Breast epithelium (tissue), 4 donors: ENCODE measurements at regions of chr9 and their contacts with region 1.

Region 1: DNA sequence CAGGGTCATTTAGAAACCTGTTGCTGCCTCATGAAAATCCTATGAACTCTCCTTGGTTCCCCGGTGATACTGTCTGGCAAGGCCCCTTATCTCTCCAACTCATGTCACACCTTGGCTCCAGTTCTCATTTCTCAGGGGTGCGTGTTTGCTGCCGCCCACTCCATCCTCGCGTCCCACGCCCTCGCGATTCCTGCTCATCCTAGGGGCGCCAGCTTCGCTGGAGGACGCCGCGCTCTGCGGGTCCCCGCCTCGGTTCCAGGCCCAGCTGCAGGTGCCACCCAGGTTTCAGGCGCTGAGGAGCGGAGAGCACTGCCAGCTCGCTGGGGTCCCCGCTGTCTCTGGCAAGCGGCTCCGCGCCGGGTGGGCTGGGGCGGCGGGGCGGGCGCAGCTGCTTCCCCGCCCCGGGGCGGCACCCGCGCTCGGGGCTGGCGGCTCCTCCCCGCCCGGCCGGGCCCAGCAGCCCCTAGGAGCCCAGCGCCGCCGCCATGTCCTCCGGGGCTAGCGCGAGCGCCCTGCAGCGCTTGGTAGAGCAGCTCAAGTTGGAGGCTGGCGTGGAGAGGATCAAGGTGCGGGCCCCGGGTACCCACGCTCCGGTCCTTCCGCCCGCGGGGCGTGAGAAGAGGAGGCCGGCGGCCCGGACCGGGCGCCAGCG is at the start of gene GNG10:
- DNase-seq: peak in 1 of 2 donors; percentile 52
- H3K4me3 ChIP-seq: peak within 1 kb of the TSS; percentile 76 to 77 (median 76)
- H3K27ac ChIP-seq: peak within 1 kb of the TSS; percentile 66 to 70
- H3K4me1 ChIP-seq: no peaks in the 10 kb centered on the region
- H3K27me3 ChIP-seq: no peaks in the 10 kb centered on the region
- CTCF ChIP-seq: no peak
- POLR2A ChIP-seq: no peak
- total RNA-seq, gene GNG10: 53.4 to 95.7 (median 91.4) TPM

Region 2: DNA sequence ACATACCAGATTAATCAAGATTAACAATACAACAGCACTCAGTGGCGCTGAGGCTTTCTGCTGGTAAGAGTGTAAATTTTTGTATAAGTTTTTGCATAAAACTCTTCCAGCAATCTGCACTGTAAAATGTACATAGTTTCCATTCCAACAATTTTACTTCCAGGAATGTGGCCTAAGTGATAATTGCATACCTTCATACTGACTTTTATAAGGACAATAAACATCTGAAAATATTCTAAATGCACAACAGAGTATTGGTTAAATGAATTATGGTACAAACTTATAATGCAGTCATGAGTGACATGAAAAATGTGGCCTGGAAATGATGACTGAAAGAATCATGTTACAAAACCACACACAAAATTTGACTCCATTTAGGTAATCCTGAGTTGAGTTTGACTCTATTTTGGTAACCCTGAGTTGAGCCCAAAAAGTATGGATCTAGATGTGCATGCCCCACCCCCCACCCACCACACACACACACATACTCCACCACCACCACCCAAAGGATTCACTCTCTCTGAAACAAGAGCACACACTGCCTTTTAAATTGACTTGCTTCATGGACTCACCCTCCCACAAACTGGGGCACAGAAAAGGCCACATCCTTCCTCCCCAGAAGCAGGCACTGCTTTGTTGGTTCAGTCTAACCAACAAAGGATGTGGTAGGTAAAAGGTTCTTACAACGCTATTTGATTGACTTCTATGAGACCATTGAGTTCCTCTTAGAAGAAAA is 376.2 kb after region 1 on chr9:
- intact Hi-C with region 1: loop called (anchors 5 kb)
- DNase-seq: no peak
- H3K4me3 ChIP-seq: no peak overlapping the region
- H3K27ac ChIP-seq: no peak overlapping the region
- H3K4me1 ChIP-seq: no peaks in the 10 kb centered on the region
- H3K27me3 ChIP-seq: no peaks in the 10 kb centered on the region
- CTCF ChIP-seq: no peak
- POLR2A ChIP-seq: no peak

Region 3: DNA sequence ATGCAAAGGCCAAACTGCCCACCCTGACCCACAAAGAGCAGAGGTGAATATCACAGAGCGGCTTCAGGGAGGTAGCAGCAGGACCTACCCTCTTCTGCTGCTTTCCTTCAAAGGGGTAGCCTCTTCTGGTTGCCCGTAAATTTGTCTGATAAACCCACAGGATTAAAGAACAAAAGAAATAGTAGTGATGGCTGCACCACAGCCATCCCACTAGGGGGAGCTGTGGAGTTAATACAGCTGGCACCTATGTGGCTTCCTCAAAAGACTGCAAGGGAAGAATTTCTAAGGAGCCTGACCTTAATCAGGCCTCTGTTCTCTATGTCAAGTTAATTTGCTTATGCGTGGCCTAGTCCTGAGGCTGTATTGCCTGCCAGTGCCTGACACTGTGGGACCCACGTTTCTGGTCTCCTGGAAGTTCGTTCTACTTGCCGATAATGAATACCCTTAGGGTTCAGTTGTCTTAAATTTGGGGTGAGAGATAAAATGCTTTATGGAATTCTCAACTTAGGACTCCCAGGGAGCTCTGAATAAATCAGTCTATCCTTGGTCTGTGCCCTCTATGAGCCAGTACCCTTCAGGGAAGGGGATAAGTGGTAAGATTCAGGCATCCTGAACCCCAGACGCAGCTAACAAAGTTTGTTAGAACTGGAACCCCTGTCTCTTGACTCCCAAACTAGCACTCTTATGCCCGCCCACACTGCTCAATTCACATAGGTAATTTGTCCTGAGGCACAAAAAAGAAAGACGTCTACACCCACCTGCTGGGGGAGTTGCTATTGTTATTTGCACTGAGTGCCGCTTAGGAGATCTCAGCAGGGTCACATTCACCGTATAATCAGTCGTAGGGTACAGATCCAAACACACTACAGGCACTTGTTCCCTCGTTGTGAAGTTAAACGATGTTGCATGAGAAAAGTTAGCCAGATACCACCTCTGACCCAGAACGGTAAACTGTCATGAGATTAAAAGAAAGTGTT is 436.7 kb after region 1 on chr9:
- intact Hi-C with region 1: no loop called
- DNase-seq: no peak
- H3K4me3 ChIP-seq: no peak overlapping the region
- H3K27ac ChIP-seq: no peak overlapping the region
- H3K4me1 ChIP-seq: no peaks in the 10 kb centered on the region
- H3K27me3 ChIP-seq: no peaks in the 10 kb centered on the region
- CTCF ChIP-seq: peak; percentile 61 to 75 (median 71)
- POLR2A ChIP-seq: no peak